Dorsolateral prefrontal cortex (tissue), 120 donors: ENCODE measurements at regions of chr3 and their contacts with region 1.

Region 1: GRCh38 chr3:14921078-14921616 is 26.2 kb upstream of the NR2C2 start:
- DNase-seq: peak; percentile 79 to 94 (median 86)
- H3K4me3 ChIP-seq: no peak overlapping the region
- H3K27ac ChIP-seq: no peak overlapping the region
- H3K27me3 ChIP-seq: peaks cover 0 to 1% (median 0%) of the 10 kb centered on the region in 45 donors
- CTCF ChIP-seq: peak; percentile 87 to 100 (median 98)

Region 2: DNA sequence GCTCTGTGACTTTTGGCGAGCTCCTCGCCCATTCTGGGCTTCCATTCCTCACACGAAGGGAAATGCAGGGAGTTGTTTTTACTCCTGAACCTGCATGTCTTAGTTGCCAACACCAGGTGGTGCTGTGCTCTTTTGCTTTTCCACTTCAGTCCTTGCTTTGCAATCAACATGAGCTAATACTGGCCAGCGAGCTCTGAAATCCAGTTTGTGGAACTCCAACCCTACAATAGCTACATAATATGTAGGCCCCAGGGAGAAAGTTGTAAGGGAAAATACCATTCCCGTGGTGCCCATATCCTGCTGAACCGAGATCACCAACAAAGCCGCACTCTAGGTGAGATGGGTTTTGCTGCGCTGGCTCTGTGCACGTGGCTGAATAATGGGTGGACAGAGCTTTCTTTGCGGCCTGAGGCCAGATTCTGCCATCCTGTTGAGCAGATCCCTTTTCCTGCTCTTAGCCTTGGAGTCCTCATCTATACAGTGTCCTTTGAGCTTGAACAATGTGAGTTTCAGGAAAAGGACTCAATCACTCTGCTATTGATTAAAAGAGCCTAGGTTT is 717.5 kb before region 1 on chr3:
- intact Hi-C with region 1: loop called in 1 of 2 experiments (anchors 10 kb)
- DNase-seq: peak in 9 of 10 donors; percentile 58 to 84 (median 72)
- H3K4me3 ChIP-seq: no peak overlapping the region
- H3K27ac ChIP-seq: peak overlapping the region in 15 of 59 donors; percentile 6 to 66 (median 31)
- H3K27me3 ChIP-seq: no peaks in the 10 kb centered on the region
- CTCF ChIP-seq: peak; percentile 79 to 97 (median 91)

Region 3: GRCh38 chr3:14672588-14672987 is 248.6 kb before region 1 on chr3:
- intact Hi-C with region 1: loop called (anchors 1 to 2 kb)
- DNase-seq: no peak
- H3K4me3 ChIP-seq: no peak overlapping the region
- H3K27ac ChIP-seq: peak overlapping the region in 1 of 59 donors; percentile 63
- H3K27me3 ChIP-seq: no peaks in the 10 kb centered on the region
- CTCF ChIP-seq: no peak

Region 4: GRCh38 chr3:14947886-14948555 is 26.9 kb after region 1 on chr3:
- intact Hi-C with region 1: loop called in 1 of 2 experiments (anchors 2 kb)
- DNase-seq: peak; percentile 97 to 99 (median 98)
- H3K4me3 ChIP-seq: peak overlapping the region; percentile 65 to 98 (median 91)
- H3K27ac ChIP-seq: peak overlapping the region; percentile 95 to 100 (median 100)
- H3K27me3 ChIP-seq: no peaks in the 10 kb centered on the region
- CTCF ChIP-seq: peak in 2 of 56 donors; percentile 4 to 13

Region 5: GRCh38 chr3:14976317-14976716 is 55.2 kb after region 1 on chr3:
- intact Hi-C with region 1: no loop called
- DNase-seq: no peak
- H3K4me3 ChIP-seq: no peak overlapping the region
- H3K27ac ChIP-seq: peak overlapping the region in 1 of 59 donors; percentile 13
- H3K27me3 ChIP-seq: no peaks in the 10 kb centered on the region
- CTCF ChIP-seq: no peak

Region 6: GRCh38 chr3:15953841-15954240 is 1032.7 kb after region 1 on chr3:
- intact Hi-C with region 1: no loop called
- DNase-seq: no peak
- H3K4me3 ChIP-seq: no peak overlapping the region
- H3K27ac ChIP-seq: no peak overlapping the region
- H3K27me3 ChIP-seq: no peaks in the 10 kb centered on the region
- CTCF ChIP-seq: peak in 3 of 56 donors; percentile 6 to 13 (median 6)